ENCODE measurements at regions of chr14 and their contacts with region 1.

Region 1: DNA sequence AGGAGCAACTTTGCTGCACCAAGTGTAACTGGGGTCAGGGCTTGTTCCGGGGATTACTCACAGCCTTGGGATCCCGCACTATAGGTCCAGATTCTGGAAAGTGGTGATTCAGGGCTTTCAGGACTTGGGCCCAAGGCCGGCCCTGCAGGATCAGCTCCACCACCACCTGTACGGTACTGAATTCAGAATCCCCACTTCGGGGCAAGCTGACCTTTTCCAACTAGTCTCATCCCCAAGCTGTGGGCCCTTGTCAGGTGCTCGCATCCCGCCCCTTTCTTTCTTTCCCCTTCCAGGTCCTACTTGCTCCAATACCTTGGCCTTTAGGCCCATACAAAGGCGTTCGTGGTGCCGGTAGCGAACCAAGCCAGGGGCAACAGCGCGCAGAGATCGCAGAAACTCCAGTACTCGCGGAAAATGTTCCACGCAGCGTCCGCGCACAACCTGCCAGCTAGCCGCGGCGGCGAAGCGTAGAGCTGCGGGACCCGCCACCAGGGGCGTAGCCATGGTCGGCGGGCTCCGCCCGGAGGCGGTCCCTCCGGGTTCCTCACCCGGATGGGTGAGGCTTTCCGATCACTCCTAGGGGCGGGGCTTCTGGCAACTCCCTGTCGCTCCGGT is 487 bp downstream of the TINF2 start:
- DNase-seq: peak; percentile 99
- H3K4me3 Mint-ChIP-seq: peak overlapping the region; percentile 99
- H3K27ac Mint-ChIP-seq: peak overlapping the region; percentile 100
- H3K4me1 Mint-ChIP-seq: peaks cover 61% of the 10 kb centered on the region
- H3K27me3 Mint-ChIP-seq: no peaks in the 10 kb centered on the region

Region 2: GRCh38 chr14:24188251-24189058 is 53.5 kb before region 1 on chr14 and contains the start of gene IPO4:
- intact Hi-C with region 1: loop called (anchors 1 kb)
- DNase-seq: peak; percentile 98
- H3K4me3 Mint-ChIP-seq: peak within 1 kb of the TSS; percentile 92
- H3K27ac Mint-ChIP-seq: peak within 1 kb of the TSS; percentile 93
- H3K4me1 Mint-ChIP-seq: peaks cover 33% of the 10 kb centered on the region
- H3K27me3 Mint-ChIP-seq: no peaks in the 10 kb centered on the region
- total RNA-seq, gene IPO4: 107 and 112 TPM in 2 replicates

Region 3: GRCh38 chr14:24271134-24271833 is 29.3 kb after region 1 on chr14 and contains the start of gene RABGGTA:
- intact Hi-C with region 1: loop called (anchors 1 kb)
- DNase-seq: peak; percentile 97
- H3K4me3 Mint-ChIP-seq: peak within 1 kb of the TSS; percentile 93
- H3K27ac Mint-ChIP-seq: peak within 1 kb of the TSS; percentile 95
- H3K4me1 Mint-ChIP-seq: peaks cover 42% of the 10 kb centered on the region
- H3K27me3 Mint-ChIP-seq: no peaks in the 10 kb centered on the region
- total RNA-seq, gene RABGGTA: 49.6 and 51.1 TPM in 2 replicates

Region 4: DNA sequence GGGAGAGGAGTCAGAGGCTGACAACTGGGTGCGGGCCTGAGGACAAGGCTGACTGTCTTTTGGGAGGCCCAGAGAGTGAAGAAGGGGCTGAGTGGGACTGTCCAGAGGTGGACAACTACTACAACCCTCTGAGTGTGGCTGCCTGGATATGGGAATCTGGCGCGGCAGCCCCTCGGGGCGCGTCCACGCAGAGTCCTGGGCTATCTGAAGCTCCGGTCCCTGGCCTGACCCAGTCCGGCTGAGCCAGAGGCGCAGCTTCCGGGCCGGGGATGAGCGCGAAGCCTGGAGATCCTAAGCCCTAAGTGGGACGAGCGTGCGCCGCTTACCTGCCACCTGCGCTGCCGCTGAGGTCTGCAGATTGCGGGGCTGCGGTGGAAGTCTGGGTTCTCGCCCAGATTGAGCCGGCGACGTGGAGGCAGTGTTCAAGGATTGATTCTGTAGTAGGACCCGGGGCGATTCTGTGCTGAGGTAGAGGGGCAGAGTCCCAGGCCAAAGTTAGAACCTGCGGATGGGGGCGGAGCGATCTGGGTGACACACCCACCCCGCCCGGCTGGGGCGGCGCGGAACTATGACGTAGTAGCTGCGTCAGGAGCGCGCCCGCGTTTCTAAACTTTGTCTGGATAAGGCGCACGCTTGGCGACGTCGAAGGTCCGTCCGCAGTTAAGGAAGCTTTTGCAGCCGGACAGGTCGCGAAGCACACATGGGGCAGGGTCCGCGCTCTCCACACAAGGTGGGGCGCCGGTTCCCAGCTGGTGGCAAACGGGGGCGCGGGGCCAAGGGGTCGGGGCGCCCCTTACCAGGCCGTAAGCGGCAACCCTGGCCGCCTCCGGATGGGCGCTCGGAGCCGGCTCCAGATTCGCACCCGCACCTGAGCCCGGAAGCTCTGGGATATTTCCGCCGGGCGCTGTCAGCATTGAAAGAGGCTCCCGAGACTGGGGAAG is 57.6 kb after region 1 on chr14 and contains the starts of genes DHRS1 and NOP9:
- intact Hi-C with region 1: loop called (anchors 1 kb)
- DNase-seq: peak; percentile 98
- H3K4me3 Mint-ChIP-seq: peak within 1 kb of the TSS; percentile 86
- H3K27ac Mint-ChIP-seq: peak within 1 kb of the TSS; percentile 91
- H3K4me1 Mint-ChIP-seq: peaks cover 36% of the 10 kb centered on the region
- H3K27me3 Mint-ChIP-seq: no peaks in the 10 kb centered on the region
- total RNA-seq, gene DHRS1: 10.1 and 10.3 TPM in 2 replicates
- total RNA-seq, gene NOP9: 48.3 and 52.2 TPM in 2 replicates

Region 5: GRCh38 chr14:24332268-24332993 is 90.5 kb after region 1 on chr14:
- intact Hi-C with region 1: loop called (anchors 1 kb)
- DNase-seq: peak; percentile 95
- H3K4me3 Mint-ChIP-seq: peak overlapping the region; percentile 87
- H3K27ac Mint-ChIP-seq: peak overlapping the region; percentile 26
- H3K4me1 Mint-ChIP-seq: peaks cover 51% of the 10 kb centered on the region
- H3K27me3 Mint-ChIP-seq: peaks cover 33% of the 10 kb centered on the region

Region 6: GRCh38 chr14:24442273-24443052 is 200.5 kb after region 1 on chr14 and contains the start of gene SDR39U1:
- intact Hi-C with region 1: loop called (anchors 1 kb)
- DNase-seq: peak; percentile 99
- H3K4me3 Mint-ChIP-seq: peak within 1 kb of the TSS; percentile 98
- H3K27ac Mint-ChIP-seq: peak within 1 kb of the TSS; percentile 99
- H3K4me1 Mint-ChIP-seq: peaks cover 49% of the 10 kb centered on the region
- H3K27me3 Mint-ChIP-seq: peaks cover 4% of the 10 kb centered on the region
- total RNA-seq, gene SDR39U1: 40.8 and 49.7 TPM in 2 replicates

Region 7: GRCh38 chr14:25821527-25821926 is 1579.6 kb after region 1 on chr14:
- intact Hi-C with region 1: no loop called
- DNase-seq: no peak
- H3K4me3 Mint-ChIP-seq: no peak overlapping the region
- H3K27ac Mint-ChIP-seq: no peak overlapping the region
- H3K4me1 Mint-ChIP-seq: no peaks in the 10 kb centered on the region
- H3K27me3 Mint-ChIP-seq: no peaks in the 10 kb centered on the region

Measured in activated CD4-positive, alpha-beta T cell treated with anti-CD3 and anti-CD28 coated beads, Interleukin-2, amount 10 ng/mL, durations not matched to agents 24 days and 14 days (primary cell).